Gastrocnemius medialis (tissue), 4 donors: ENCODE measurements at regions of chr1 and their contacts with region 1.

Region 1: GRCh38 chr1:108746372-108747205 is at the start of gene STXBP3:
- DNase-seq: peak; percentile 94 to 98
- ATAC-seq: peak; percentile 94 to 95
- H3K4me3 ChIP-seq: peak within 1 kb of the TSS; percentile 88 to 98 (median 91)
- H3K27ac ChIP-seq: peak within 1 kb of the TSS; percentile 91 to 98 (median 96)
- H3K4me1 ChIP-seq: peaks cover 5 to 14% of the 10 kb centered on the region in 2 donors
- H3K27me3 ChIP-seq: no peaks in the 10 kb centered on the region
- CTCF ChIP-seq: peak; percentile 75 to 95 (median 89)
- POLR2A ChIP-seq: peak; percentile 91 to 94
- total RNA-seq, gene STXBP3: 18.4 to 39.4 (median 24.3) TPM

Region 2: DNA sequence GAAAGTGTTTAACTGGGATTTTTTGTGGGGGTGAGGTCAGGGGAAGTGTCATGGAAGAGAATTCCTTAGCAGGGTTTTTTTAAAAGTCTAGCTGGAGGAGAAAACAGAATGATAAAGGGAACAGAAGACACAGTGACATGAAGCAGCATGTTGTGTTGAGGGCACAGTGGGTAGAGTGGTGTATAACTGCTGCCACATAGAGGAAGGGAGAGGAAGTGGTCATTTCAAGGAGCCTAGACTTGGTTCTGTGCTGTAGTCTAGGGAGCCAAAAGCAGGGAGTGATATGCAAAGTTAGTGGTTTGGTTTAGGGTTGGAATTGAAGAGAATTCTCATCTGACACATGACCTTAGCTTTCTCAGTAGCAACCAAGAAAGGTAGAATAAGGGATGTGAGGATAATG is 176.5 kb before region 1 on chr1:
- in situ Hi-C with region 1: no loop called
- intact Hi-C with region 1: no loop called
- DNase-seq: no peak
- ATAC-seq: no peak
- H3K4me3 ChIP-seq: no peak overlapping the region
- H3K27ac ChIP-seq: no peak overlapping the region
- H3K4me1 ChIP-seq: no peaks in the 10 kb centered on the region
- H3K27me3 ChIP-seq: no peaks in the 10 kb centered on the region
- CTCF ChIP-seq: no peak
- POLR2A ChIP-seq: no peak

Region 3: DNA sequence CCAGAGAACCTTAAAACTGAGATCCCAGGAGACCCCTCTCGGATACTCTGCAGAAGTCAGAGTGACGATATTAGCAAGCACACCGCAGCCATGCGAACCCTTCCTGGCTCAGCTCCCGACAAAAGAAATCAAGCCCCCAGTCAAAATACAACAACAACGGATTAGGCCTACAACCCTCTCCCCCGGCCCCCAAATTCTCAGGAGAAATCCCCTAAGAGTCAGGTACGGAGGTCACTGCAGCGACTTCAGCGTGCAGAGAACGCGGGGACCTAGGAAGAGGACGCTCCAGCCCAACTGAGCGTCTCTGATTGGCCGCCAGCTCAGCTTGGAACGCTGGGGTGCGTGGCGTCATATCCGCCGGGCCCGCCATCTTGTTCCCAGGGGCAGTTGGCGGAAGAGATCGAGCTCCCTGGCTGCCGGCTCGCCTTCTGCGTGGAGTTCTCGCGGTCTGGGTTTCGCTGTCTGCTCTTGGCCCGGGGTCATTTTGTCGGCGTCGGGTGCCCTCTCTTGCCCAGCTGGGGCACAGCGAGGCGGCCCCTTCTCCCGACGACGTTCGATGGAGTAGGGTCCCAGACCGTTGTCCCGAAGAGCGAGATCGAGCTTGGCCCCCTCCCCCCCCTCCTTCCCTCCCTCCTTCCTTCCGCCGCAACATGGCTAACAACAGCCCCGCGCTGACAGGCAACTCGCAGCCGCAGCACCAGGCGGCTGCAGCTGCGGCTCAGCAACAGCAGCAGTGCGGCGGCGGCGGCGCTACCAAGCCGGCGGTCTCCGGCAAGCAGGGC is 54.5 kb before region 1 on chr1 and contains the start of gene PRPF38B:
- in situ Hi-C with region 1: loop called in 3 of 4 experiments (anchors 5 to 10 kb)
- intact Hi-C with region 1: loop called (anchors 1 kb)
- DNase-seq: peak; percentile 93
- ATAC-seq: peak; percentile 94 to 95
- H3K4me3 ChIP-seq: peak within 1 kb of the TSS; percentile 83 to 97 (median 91)
- H3K27ac ChIP-seq: peak within 1 kb of the TSS; percentile 95 to 99 (median 96)
- H3K4me1 ChIP-seq: peaks cover 32 to 36% of the 10 kb centered on the region in 2 donors
- H3K27me3 ChIP-seq: no peaks in the 10 kb centered on the region
- CTCF ChIP-seq: no peak
- POLR2A ChIP-seq: peak; percentile 91
- total RNA-seq, gene PRPF38B: 13.8 to 17.1 (median 15.7) TPM

Region 4: DNA sequence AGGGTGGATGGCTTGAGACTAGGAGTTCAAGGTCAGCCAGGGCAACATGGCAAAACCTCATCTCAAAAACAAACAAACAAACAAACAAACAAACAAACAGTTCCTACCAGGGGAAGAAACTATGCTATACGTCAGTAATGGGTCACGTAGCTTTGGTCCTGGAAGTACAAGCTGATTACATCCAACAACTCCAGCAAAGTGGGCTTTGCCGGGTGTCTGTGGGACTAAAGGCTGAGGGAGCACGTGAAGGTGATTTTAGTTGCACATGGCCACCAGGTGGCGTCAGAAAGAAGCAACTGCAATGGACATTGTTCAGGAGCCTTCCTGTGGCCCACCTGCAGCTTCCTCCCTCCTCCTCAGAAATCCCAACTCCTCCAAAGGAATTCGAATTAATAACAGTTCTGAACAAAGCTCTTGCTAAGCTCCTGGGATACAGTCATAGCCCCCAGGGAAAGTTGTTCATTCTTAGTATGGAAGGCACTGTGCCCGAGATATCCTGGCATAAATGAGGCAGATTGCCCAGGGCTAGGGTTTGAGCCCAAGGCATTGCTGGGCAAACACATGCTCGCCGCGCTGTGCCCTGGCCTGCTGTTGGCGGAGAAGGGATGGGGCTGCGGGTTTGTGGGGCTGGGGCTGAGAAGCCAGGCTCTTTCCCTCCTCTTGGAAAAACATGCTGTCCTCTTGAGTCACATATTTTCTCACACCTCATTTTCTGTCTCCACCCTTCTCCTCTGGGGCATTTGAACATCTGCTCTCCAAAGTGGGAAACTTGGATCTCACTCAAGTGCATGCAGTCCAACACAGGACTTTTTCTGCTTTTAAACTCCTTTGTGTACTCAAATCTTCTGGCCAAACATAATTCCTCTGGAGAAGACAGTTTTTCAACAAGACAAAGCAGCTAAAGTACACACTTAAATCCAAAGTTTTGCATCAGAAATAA is 81.7 kb after region 1 on chr1:
- in situ Hi-C with region 1: no loop called
- intact Hi-C with region 1: loop called (anchors 1 kb)
- DNase-seq: peak; percentile 62 to 77
- ATAC-seq: peak; percentile 70 to 71
- H3K4me3 ChIP-seq: no peak overlapping the region
- H3K27ac ChIP-seq: peak overlapping the region; percentile 75 to 80 (median 76)
- H3K4me1 ChIP-seq: peaks cover 27 to 32% of the 10 kb centered on the region in 2 donors
- H3K27me3 ChIP-seq: no peaks in the 10 kb centered on the region
- CTCF ChIP-seq: peak; percentile 75 to 87 (median 79)
- POLR2A ChIP-seq: no peak

Region 5: GRCh38 chr1:109041621-109042468 is 295.3 kb after region 1 on chr1 and contains the start of gene WDR47:
- in situ Hi-C with region 1: no loop called
- intact Hi-C with region 1: loop called (anchors 2 kb)
- DNase-seq: peak; percentile 93 to 95
- ATAC-seq: peak; percentile 98
- H3K4me3 ChIP-seq: peak within 1 kb of the TSS; percentile 83 to 99 (median 90)
- H3K27ac ChIP-seq: peak within 1 kb of the TSS; percentile 83 to 93 (median 90)
- H3K4me1 ChIP-seq: peaks cover 9 to 11% of the 10 kb centered on the region in 2 donors
- H3K27me3 ChIP-seq: no peaks in the 10 kb centered on the region
- CTCF ChIP-seq: peak in 1 of 5 experiments; percentile 12
- POLR2A ChIP-seq: peak; percentile 89 to 95
- total RNA-seq, gene WDR47: 13.9 to 18.8 (median 17.5) TPM